CD4-positive, alpha-beta T cell (primary cell): ENCODE measurements at regions of chr12 and their contacts with region 1.

Region 1: GRCh38 chr12:48903982-48904411 is 21.3 kb downstream of the FKBP11 start:
- DNase-seq: peak; percentile 73 to 93 (median 82)
- ATAC-seq: peak; percentile 100
- H3K4me3 ChIP-seq: peak overlapping the region; percentile 37
- H3K4me3 Mint-ChIP-seq: peak overlapping the region; percentile 54
- H3K27ac ChIP-seq: no peak overlapping the region
- H3K27ac Mint-ChIP-seq: no peak overlapping the region
- H3K4me1 ChIP-seq: peaks cover 13% of the 10 kb centered on the region
- H3K4me1 Mint-ChIP-seq: peaks cover 4% of the 10 kb centered on the region
- H3K27me3 ChIP-seq: no peaks in the 10 kb centered on the region
- H3K27me3 Mint-ChIP-seq: peaks cover 5% of the 10 kb centered on the region
- CTCF ChIP-seq: peak; percentile 80

Region 2: GRCh38 chr12:47651368-47652254 is 1252.4 kb before region 1 on chr12:
- CTCF ChIA-PET with region 1: no interaction called
- POLR2A ChIA-PET with region 1: no interaction called
- intact Hi-C with region 1: no loop called
- DNase-seq: peak; percentile 19 to 80 (median 34)
- ATAC-seq: peak; percentile 97
- H3K4me3 ChIP-seq: peak overlapping the region; percentile 3
- H3K4me3 Mint-ChIP-seq: peak overlapping the region; percentile 43
- H3K27ac ChIP-seq: no peak overlapping the region
- H3K27ac Mint-ChIP-seq: no peak overlapping the region
- H3K4me1 ChIP-seq: peaks cover 9% of the 10 kb centered on the region
- H3K4me1 Mint-ChIP-seq: peaks cover 9% of the 10 kb centered on the region
- H3K27me3 ChIP-seq: no peaks in the 10 kb centered on the region
- H3K27me3 Mint-ChIP-seq: no peaks in the 10 kb centered on the region
- CTCF ChIP-seq: peak; percentile 72

Region 3: DNA sequence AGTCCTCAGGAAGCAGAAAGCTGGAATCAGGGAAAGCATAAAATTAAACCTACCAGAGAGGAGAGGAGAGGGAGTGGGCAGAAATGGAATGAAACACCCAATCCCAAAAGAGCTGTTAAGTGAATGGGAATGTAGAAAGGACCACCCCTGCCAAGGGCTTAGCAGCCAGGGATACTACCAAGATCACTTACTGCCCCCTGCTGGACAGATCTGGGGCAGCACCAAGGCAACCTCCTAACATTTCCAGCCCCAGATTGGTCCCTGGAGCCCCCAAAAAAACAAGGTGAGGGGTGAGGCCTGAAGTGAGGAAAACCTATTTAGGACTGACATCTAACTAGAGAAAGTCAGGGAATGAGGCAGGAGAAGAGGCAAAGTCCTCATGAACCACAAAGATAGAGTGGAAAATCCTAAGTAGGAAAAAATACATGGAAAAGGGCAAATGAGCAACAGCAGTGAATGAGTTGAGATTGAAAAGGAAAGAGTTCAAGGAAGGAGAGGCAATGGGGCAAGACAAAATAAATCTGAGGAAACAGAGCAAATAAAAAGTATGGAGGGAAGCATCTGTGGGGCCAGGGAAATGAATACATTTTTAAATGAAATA is 32.5 kb after region 1 on chr12:
- CTCF ChIA-PET with region 1: interaction called, 12 read pairs
- POLR2A ChIA-PET with region 1: interaction called, 6 read pairs
- intact Hi-C with region 1: loop called (anchors 1 kb)
- DNase-seq: peak; percentile 75 to 90 (median 84)
- ATAC-seq: peak; percentile 60
- H3K4me3 ChIP-seq: no peak overlapping the region
- H3K4me3 Mint-ChIP-seq: no peak overlapping the region
- H3K27ac ChIP-seq: no peak overlapping the region
- H3K27ac Mint-ChIP-seq: peak overlapping the region; percentile 32
- H3K4me1 ChIP-seq: peaks cover 55% of the 10 kb centered on the region
- H3K4me1 Mint-ChIP-seq: peaks cover 32% of the 10 kb centered on the region
- H3K27me3 ChIP-seq: no peaks in the 10 kb centered on the region
- H3K27me3 Mint-ChIP-seq: no peaks in the 10 kb centered on the region
- CTCF ChIP-seq: peak; percentile 94

Region 4: DNA sequence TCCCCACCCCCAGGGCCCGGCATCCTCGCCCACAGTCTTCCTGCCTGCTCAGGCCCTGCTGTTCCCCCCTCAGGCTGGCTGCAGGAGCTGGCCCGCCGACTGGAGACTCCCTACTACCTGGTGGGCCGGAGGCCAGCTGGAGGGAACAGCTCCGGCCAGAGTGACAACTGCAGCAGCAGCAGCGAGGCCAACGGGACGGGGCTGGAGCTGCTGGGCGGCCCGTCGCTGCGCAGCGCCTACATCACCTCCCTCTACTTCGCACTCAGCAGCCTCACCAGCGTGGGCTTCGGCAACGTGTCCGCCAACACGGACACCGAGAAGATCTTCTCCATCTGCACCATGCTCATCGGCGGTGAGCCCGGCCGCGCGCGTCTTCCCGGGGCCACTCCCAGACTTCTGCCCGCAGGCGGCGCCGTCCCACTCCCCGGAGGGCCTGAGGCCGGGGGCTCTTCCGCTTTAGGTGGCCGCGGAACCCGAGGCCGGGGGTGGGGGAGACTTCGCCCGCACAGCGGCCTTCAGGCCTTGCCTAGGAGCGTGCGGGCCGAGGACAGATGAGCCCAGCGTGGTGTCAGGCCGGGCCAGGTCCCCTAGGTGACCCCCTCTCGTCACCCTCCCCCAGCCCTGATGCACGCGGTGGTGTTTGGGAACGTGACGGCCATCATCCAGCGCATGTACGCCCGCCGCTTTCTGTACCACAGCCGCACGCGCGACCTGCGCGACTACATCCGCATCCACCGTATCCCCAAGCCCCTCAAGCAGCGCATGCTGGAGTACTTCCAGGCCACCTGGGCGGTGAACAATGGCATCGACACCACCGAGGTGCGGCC is 645.0 kb after region 1 on chr12:
- CTCF ChIA-PET with region 1: no interaction called
- POLR2A ChIA-PET with region 1: no interaction called
- intact Hi-C with region 1: no loop called
- DNase-seq: peak in 7 of 14 experiments; percentile 23 to 61 (median 37)
- ATAC-seq: peak; percentile 49
- H3K4me3 ChIP-seq: peak overlapping the region; percentile 54
- H3K4me3 Mint-ChIP-seq: peak overlapping the region; percentile 77
- H3K27ac ChIP-seq: no peak overlapping the region
- H3K27ac Mint-ChIP-seq: no peak overlapping the region
- H3K4me1 ChIP-seq: peaks cover 15% of the 10 kb centered on the region
- H3K4me1 Mint-ChIP-seq: peaks cover 12% of the 10 kb centered on the region
- H3K27me3 ChIP-seq: peaks cover 6 to 17% of the 10 kb centered on the region in 2 experiments
- H3K27me3 Mint-ChIP-seq: peaks cover 25% of the 10 kb centered on the region
- CTCF ChIP-seq: peak; percentile 42